AG04450 (cell line): ENCODE measurements at regions of chr1 and their contacts with region 1.

Region 1: GRCh38 chr1:201904579-201904978 is 15.9 kb downstream of the SHISA4 start:
- DNase-seq: peak; percentile 91
- H3K4me3 ChIP-seq: no peak overlapping the region
- H3K27ac ChIP-seq: peak overlapping the region; percentile 98
- H3K27me3 ChIP-seq: no peaks in the 10 kb centered on the region
- CTCF ChIP-seq: no peak

Region 2: DNA sequence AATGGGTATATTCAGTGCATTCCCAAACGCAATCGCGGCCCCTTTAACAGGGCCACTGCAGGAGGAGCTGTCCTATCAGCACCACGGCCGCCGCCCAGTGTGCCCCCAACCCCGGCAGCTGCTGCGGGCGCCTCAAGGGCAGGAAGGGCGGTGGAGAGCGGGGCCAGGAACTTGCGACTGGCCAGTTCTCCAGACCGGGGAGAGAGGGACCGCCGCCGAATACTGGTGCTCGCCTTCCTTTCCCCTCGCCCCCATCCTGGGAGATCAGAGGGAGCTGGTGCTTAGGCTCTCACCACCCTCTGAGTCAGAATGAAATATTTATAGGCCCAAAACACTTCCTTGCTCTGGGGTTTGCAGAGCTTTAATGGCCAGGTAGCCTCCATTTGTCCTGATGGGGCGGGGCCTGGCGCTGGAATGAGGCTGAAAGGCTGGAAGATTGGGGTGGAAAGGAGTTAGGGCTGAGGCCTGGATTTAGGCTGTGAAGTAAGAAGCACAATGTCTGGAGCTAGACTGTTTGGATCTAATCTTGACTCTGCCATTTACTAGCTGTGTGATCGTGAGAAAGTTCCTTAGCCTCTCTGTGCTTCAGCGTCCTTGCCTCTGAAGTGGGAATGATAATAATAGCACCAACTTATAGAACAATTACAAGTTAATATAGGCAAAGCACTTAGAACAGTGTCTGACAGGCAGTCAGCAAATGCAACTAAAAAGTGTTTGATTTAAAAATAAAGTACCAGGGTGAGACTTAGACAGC is 290.1 kb before region 1 on chr1:
- CTCF ChIA-PET with region 1: no interaction called
- POLR2A ChIA-PET with region 1: no interaction called
- DNase-seq: no peak
- H3K4me3 ChIP-seq: no peak overlapping the region
- H3K27ac ChIP-seq: no peak overlapping the region
- H3K27me3 ChIP-seq: no peaks in the 10 kb centered on the region
- CTCF ChIP-seq: no peak

Region 3: GRCh38 chr1:201756406-201756805 is 148.2 kb before region 1 on chr1:
- CTCF ChIA-PET with region 1: no interaction called
- POLR2A ChIA-PET with region 1: no interaction called
- DNase-seq: no peak
- H3K4me3 ChIP-seq: no peak overlapping the region
- H3K27ac ChIP-seq: no peak overlapping the region
- H3K27me3 ChIP-seq: no peaks in the 10 kb centered on the region
- CTCF ChIP-seq: no peak

Region 4: GRCh38 chr1:201859424-201859823 is 45.2 kb before region 1 on chr1:
- CTCF ChIA-PET with region 1: no interaction called
- POLR2A ChIA-PET with region 1: no interaction called
- DNase-seq: no peak
- H3K4me3 ChIP-seq: no peak overlapping the region
- H3K27ac ChIP-seq: no peak overlapping the region
- H3K27me3 ChIP-seq: no peaks in the 10 kb centered on the region
- CTCF ChIP-seq: no peak

Region 5: DNA sequence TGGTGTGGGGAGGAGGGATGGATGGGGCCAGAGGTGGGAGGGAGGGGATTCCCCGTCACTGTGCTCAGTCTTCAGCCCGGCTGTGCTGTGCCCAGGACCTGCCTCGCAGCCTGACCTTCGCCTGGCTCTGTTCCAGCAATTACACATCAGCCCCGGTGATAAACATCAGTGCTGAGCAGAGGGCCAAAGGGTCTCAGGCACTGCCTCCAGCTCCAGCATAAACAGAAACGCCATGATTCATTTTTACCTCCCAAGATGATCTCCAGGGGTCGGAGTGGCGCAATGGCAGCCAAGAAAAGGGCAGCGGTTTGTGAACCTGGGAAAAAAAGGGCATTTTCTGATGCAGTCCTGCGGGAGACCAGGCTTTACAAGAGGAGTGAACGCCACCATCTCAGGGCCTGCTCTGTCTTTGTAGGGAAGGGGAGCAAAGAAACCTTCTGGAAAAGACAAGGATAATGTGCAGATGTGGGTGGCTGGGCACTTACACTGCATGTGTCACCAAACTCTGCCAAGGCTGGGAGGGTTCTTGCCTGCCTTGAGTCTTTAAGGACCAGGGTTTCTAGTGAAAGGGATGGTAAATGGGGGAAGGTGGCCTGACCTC is 12.2 kb after region 1 on chr1:
- CTCF ChIA-PET with region 1: interaction called, 4 read pairs
- POLR2A ChIA-PET with region 1: interaction called, 22 read pairs
- DNase-seq: peak; percentile 79
- H3K4me3 ChIP-seq: no peak overlapping the region
- H3K27ac ChIP-seq: peak overlapping the region; percentile 93
- H3K27me3 ChIP-seq: no peaks in the 10 kb centered on the region
- CTCF ChIP-seq: no peak

Region 6: GRCh38 chr1:201937624-201938213 is 33.1 kb after region 1 on chr1:
- CTCF ChIA-PET with region 1: interaction called, 90 read pairs
- POLR2A ChIA-PET with region 1: interaction called, 15 read pairs
- DNase-seq: peak; percentile 77
- H3K4me3 ChIP-seq: no peak overlapping the region
- H3K27ac ChIP-seq: peak overlapping the region; percentile 92
- H3K27me3 ChIP-seq: no peaks in the 10 kb centered on the region
- CTCF ChIP-seq: no peak

Region 7: GRCh38 chr1:201946224-201946908 is 41.8 kb after region 1 on chr1 and contains the start of gene LMOD1:
- CTCF ChIA-PET with region 1: interaction called, 90 read pairs
- POLR2A ChIA-PET with region 1: interaction called, 24 read pairs
- DNase-seq: peak; percentile 95
- H3K4me3 ChIP-seq: peak within 1 kb of the TSS; percentile 98
- H3K27ac ChIP-seq: peak within 1 kb of the TSS; percentile 99
- H3K27me3 ChIP-seq: no peaks in the 10 kb centered on the region
- CTCF ChIP-seq: peak; percentile 26; the same call in 1 of the 2 replicates
- polyA plus RNA-seq, gene LMOD1: 41.1 and 52.6 TPM in 2 replicates

Region 8: GRCh38 chr1:201964261-201964660 is 59.7 kb after region 1 on chr1:
- CTCF ChIA-PET with region 1: interaction called, 11 read pairs
- POLR2A ChIA-PET with region 1: interaction called, 4 read pairs
- DNase-seq: peak; percentile 39
- H3K4me3 ChIP-seq: no peak overlapping the region
- H3K27ac ChIP-seq: no peak overlapping the region
- H3K27me3 ChIP-seq: no peaks in the 10 kb centered on the region
- CTCF ChIP-seq: no peak

Region 9: GRCh38 chr1:202090997-202091396 is 186.4 kb after region 1 on chr1:
- CTCF ChIA-PET with region 1: no interaction called
- POLR2A ChIA-PET with region 1: no interaction called
- DNase-seq: no peak
- H3K4me3 ChIP-seq: no peak overlapping the region
- H3K27ac ChIP-seq: no peak overlapping the region
- H3K27me3 ChIP-seq: peaks cover 9% of the 10 kb centered on the region
- CTCF ChIP-seq: no peak